Prostate gland (tissue), 2 donors: ENCODE measurements at regions of chrX and their contacts with region 1.

Region 1: DNA sequence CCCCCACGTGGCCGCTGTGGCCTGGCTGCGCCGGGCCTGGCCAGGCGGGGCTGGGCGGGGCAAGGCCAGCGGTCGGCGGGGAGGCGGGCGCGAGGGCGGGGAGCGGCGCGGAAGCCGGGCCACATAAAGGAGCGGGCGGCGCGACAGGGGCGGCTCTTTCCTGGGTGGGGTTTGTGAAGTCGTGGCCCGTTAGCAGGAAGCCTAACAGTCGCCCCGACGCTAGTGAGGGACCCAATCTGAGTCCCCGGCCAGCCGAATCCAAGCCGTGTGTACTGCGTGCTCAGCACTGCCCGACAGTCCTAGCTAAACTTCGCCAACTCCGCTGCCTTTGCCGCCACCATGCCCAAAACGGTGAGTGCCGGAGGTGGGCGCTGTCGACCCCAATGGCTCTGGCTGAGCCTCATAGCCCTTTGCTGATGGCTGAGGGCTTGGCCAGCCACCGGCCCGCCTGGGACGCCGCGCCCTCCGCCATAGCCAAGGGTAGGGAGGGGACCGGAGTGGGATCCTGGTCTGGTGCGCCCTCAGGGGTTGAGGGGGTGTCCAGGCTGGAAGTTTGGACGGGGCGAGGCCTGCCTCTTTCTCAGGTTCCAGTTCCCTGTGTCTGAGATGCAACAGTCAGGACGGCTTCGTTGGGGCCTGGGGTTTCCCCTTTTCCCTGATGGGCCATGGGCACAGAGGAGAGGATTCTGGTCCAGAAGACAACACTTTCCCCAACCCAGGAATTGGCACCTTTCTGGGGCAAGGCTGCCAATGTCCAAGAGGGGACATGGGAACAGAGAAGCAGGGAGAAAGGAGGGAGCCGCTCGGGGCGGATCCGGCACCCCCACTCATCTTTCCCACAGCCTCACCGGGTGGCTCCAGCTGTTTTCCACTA is at the start of gene MSN:
- DNase-seq: peak; percentile 39
- H3K4me3 ChIP-seq: peak within 1 kb of the TSS; percentile 49 to 54
- H3K27ac ChIP-seq: peak within 1 kb of the TSS; percentile 75 to 79
- H3K4me1 ChIP-seq: no peaks in the 10 kb centered on the region
- H3K27me3 ChIP-seq: no peaks in the 10 kb centered on the region
- CTCF ChIP-seq: no peak
- POLR2A ChIP-seq: peak; percentile 57
- total RNA-seq, gene MSN: 53.6 to 116 TPM

Region 2: GRCh38 chrX:65723706-65724105 is 56.0 kb after region 1 on chrX:
- intact Hi-C with region 1: loop called (anchors 10 kb)
- DNase-seq: no peak
- H3K4me3 ChIP-seq: no peak overlapping the region
- H3K27ac ChIP-seq: no peak overlapping the region
- H3K4me1 ChIP-seq: no peaks in the 10 kb centered on the region
- H3K27me3 ChIP-seq: no peaks in the 10 kb centered on the region
- CTCF ChIP-seq: no peak
- POLR2A ChIP-seq: no peak